Activated naive CD4-positive, alpha-beta T cell treated with anti-CD3 and anti-CD28 coated beads, Interleukin-2, amount 10 ng/mL, durations not matched to agents 7 days and 5 days (primary cell): ENCODE measurements at regions of chr1 and their contacts with region 1.

Region 1: DNA sequence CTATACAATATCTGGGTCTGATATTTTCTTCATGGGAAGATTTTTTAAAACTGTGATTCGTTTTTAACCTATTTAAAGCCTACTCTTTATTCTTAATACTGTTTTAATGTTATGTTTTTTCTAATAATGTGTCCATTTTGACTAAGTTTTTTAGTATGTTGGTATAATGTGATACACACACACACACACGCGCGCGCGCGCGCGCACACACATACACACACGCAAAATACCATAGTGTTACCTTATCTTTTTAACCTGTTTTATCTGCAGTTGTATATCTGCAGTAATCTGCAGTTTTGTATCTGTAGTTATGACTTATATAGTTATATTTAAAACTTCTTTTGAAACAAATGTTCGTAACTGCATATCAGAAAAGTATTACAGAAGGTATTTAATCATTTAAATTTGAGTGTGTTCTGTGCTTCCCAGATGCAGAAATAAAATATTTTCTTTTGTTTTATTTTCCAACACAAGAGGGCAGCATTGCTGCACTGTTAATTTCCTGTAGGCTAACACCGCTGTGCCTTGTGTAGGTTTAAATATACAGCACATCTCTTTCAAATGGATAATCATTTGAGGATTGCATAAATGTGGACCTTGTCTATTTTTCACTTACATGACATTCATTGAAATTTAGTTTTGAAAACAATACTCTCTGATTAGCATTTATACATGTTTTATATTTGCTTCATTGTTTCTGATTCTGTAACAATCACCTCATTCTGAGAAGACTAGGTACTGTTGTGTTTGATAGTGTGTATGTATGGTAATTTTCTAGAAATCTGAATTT is 166.1 kb downstream of the PDE4B start:
- DNase-seq: no peak
- H3K4me3 Mint-ChIP-seq: no peak overlapping the region
- H3K27ac Mint-ChIP-seq: no peak overlapping the region
- H3K4me1 Mint-ChIP-seq: peaks cover 6% of the 10 kb centered on the region
- H3K27me3 Mint-ChIP-seq: no peaks in the 10 kb centered on the region

Region 2: DNA sequence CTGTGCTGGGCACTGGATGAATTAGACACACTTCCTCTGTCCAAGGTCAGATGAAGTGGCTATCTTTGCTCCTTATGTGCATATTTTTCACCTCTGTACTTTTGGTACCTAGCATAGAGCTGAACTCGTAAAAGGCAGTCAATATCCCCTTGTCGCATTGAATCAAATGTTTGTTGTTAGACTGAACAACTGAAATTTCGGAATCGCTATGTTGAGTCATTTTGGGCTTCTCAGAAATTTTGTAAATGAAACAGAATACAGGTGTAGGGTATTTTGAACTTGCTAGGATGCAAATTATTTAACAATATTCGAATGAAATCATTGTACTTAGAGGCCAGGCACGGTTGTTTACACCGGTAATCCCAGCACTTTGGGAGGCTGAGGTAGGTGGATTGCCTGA is 118.1 kb before region 1 on chr1:
- CTCF ChIA-PET with region 1: no interaction called
- DNase-seq: no peak
- H3K4me3 Mint-ChIP-seq: no peak overlapping the region
- H3K27ac Mint-ChIP-seq: no peak overlapping the region
- H3K4me1 Mint-ChIP-seq: no peaks in the 10 kb centered on the region
- H3K27me3 Mint-ChIP-seq: peaks cover 4% of the 10 kb centered on the region

Region 3: GRCh38 chr1:66452162-66452561 is 493.4 kb after region 1 on chr1:
- CTCF ChIA-PET with region 1: interaction called, 53 read pairs
- DNase-seq: no peak
- H3K4me3 Mint-ChIP-seq: no peak overlapping the region
- H3K27ac Mint-ChIP-seq: no peak overlapping the region
- H3K4me1 Mint-ChIP-seq: no peaks in the 10 kb centered on the region
- H3K27me3 Mint-ChIP-seq: peaks cover 18% of the 10 kb centered on the region